ENCODE measurements at regions of chr12 and their contacts with region 1.

Region 1: DNA sequence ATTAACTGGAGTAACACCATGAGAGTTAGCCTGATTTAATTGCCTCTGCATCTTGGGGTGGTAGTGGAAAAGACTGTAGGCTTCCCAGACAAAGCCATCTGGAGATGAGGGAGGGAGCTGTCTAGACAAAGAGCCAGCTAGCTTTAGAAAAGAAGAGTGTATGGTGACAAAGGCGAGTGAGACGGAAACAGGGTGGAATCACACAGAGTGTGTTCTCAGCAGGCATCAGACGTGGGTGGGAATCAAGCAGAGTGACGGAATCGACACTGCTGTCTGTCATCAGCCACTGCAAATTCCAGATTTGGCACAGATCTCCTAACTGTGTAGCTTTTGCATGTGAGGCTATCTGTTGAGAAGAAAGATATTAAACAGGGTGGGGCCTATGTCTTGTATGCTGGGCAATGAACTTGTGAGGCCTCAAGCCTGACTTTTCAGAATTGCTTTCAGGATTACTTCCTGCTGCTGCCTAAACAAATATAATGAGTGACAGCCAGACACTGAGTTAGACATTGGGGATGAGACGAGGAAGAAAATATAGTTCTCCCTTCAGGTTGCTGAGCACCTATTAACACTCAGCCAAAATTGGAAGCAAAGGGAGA is 236.5 kb upstream of the GRIP1 start:
- DNase-seq: no peak
- ATAC-seq: no peak
- H3K4me3 ChIP-seq: no peak overlapping the region
- H3K4me3 Mint-ChIP-seq: no peak overlapping the region
- H3K27ac ChIP-seq: no peak overlapping the region
- H3K27ac Mint-ChIP-seq: no peak overlapping the region
- H3K4me1 ChIP-seq: no peaks in the 10 kb centered on the region
- H3K4me1 Mint-ChIP-seq: peaks cover 13% of the 10 kb centered on the region
- H3K27me3 ChIP-seq: no peaks in the 10 kb centered on the region
- H3K27me3 Mint-ChIP-seq: no peaks in the 10 kb centered on the region
- CTCF ChIP-seq: no peak

Region 2: GRCh38 chr12:66823857-66824570 is 91.4 kb before region 1 on chr12:
- CTCF ChIA-PET with region 1: no interaction called
- POLR2A ChIA-PET with region 1: no interaction called
- intact Hi-C with region 1: no loop called
- DNase-seq: no peak
- ATAC-seq: no peak
- H3K4me3 ChIP-seq: no peak overlapping the region
- H3K4me3 Mint-ChIP-seq: no peak overlapping the region
- H3K27ac ChIP-seq: no peak overlapping the region
- H3K27ac Mint-ChIP-seq: no peak overlapping the region
- H3K4me1 ChIP-seq: peaks cover under 1% of the 10 kb centered on the region
- H3K4me1 Mint-ChIP-seq: peaks cover 7% of the 10 kb centered on the region
- H3K27me3 ChIP-seq: no peaks in the 10 kb centered on the region
- H3K27me3 Mint-ChIP-seq: no peaks in the 10 kb centered on the region
- CTCF ChIP-seq: no peak

Region 3: DNA sequence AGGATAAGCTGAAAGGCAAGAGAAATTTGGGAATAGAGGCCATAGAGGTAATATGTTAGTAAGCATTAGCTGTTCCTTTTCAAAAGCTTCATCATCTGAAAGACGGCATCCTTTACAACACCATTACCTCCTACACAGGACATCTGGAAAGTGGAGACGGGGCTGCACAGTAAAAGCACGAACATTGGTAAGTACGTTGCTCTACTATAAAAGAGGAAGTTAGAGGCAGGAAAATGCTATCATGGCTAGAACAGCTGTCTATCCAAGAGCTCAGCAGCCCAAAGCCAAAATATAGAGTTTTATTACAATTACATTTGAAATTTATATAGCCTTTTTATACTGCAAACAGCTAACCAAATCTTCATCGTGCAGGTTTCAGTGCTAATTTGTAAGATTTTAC is 64.3 kb before region 1 on chr12:
- CTCF ChIA-PET with region 1: no interaction called
- POLR2A ChIA-PET with region 1: no interaction called
- intact Hi-C with region 1: no loop called
- DNase-seq: no peak
- ATAC-seq: no peak
- H3K4me3 ChIP-seq: no peak overlapping the region
- H3K4me3 Mint-ChIP-seq: no peak overlapping the region
- H3K27ac ChIP-seq: no peak overlapping the region
- H3K27ac Mint-ChIP-seq: no peak overlapping the region
- H3K4me1 ChIP-seq: no peaks in the 10 kb centered on the region
- H3K4me1 Mint-ChIP-seq: no peaks in the 10 kb centered on the region
- H3K27me3 ChIP-seq: no peaks in the 10 kb centered on the region
- H3K27me3 Mint-ChIP-seq: peaks cover 4% of the 10 kb centered on the region
- CTCF ChIP-seq: no peak

Region 4: DNA sequence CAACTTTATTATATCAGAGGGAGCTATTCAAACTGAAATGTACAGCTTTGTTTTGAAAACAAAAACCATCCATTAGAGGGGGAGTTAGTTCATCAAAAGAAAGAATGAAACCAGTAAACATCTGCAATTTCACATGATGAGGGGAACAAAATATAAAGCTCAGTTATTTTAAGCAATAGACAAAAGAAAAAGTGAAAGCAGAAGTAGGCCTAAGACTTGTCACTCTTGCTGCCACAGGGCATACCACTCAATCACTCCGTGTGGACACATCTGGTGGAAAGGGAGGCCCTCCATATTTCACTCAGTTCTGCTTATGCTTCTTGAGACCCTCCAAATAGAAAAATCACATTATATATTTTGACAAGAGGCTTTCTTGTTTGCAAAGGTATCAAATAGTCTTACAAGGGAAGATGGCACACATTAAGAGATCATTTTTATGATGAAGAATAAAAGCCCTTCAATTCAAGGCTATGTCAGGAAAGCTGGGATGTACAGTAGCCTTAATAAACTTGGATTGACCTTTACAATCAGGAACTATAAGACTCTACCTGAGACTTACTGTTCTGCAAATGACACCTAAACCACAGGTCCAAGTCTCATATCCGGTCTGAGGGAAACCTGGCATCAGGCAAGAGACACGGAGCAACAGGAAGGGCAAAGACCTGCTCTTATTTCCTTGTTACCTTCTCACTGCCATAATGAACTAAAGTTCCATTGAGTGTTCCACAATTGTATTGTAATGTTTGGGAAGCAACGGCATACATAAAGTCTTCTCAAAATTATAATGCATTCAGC is 14.1 kb before region 1 on chr12:
- CTCF ChIA-PET with region 1: interaction called, 3 read pairs
- POLR2A ChIA-PET with region 1: interaction called, 10 read pairs
- intact Hi-C with region 1: no loop called
- DNase-seq: peak in 4 of 14 experiments; percentile 12 to 43 (median 22)
- ATAC-seq: peak; percentile 41
- H3K4me3 ChIP-seq: no peak overlapping the region
- H3K4me3 Mint-ChIP-seq: peak overlapping the region; percentile 71
- H3K27ac ChIP-seq: no peak overlapping the region
- H3K27ac Mint-ChIP-seq: peak overlapping the region; percentile 32
- H3K4me1 ChIP-seq: no peaks in the 10 kb centered on the region
- H3K4me1 Mint-ChIP-seq: peaks cover 47% of the 10 kb centered on the region
- H3K27me3 ChIP-seq: no peaks in the 10 kb centered on the region
- H3K27me3 Mint-ChIP-seq: no peaks in the 10 kb centered on the region
- CTCF ChIP-seq: no peak

Region 5: GRCh38 chr12:66964629-66965028 is 49.2 kb after region 1 on chr12:
- CTCF ChIA-PET with region 1: no interaction called
- POLR2A ChIA-PET with region 1: no interaction called
- intact Hi-C with region 1: loop called in 1 of 2 experiments (anchors 10 kb)
- DNase-seq: peak in 11 of 14 experiments; percentile 1 to 90 (median 27)
- ATAC-seq: peak; percentile 96
- H3K4me3 ChIP-seq: no peak overlapping the region
- H3K4me3 Mint-ChIP-seq: peak overlapping the region; percentile 69
- H3K27ac ChIP-seq: peak overlapping the region in 1 of 2 donors; percentile 60
- H3K27ac Mint-ChIP-seq: peak overlapping the region; percentile 86
- H3K4me1 ChIP-seq: peaks cover 13% of the 10 kb centered on the region
- H3K4me1 Mint-ChIP-seq: peaks cover 44% of the 10 kb centered on the region
- H3K27me3 ChIP-seq: no peaks in the 10 kb centered on the region
- H3K27me3 Mint-ChIP-seq: no peaks in the 10 kb centered on the region
- CTCF ChIP-seq: no peak